ENCODE measurements at regions of chr12 and their contacts with region 1.

Region 1: GRCh38 chr12:52980693-52981423 is 25.4 kb upstream of the EIF4B start:
- DNase-seq: peak; percentile 94
- H3K4me3 ChIP-seq: no peak overlapping the region
- H3K27ac ChIP-seq: no peak overlapping the region
- H3K4me1 ChIP-seq: no peaks in the 10 kb centered on the region
- H3K27me3 ChIP-seq: no peaks in the 10 kb centered on the region
- CTCF ChIP-seq: peak; percentile 100

Region 2: DNA sequence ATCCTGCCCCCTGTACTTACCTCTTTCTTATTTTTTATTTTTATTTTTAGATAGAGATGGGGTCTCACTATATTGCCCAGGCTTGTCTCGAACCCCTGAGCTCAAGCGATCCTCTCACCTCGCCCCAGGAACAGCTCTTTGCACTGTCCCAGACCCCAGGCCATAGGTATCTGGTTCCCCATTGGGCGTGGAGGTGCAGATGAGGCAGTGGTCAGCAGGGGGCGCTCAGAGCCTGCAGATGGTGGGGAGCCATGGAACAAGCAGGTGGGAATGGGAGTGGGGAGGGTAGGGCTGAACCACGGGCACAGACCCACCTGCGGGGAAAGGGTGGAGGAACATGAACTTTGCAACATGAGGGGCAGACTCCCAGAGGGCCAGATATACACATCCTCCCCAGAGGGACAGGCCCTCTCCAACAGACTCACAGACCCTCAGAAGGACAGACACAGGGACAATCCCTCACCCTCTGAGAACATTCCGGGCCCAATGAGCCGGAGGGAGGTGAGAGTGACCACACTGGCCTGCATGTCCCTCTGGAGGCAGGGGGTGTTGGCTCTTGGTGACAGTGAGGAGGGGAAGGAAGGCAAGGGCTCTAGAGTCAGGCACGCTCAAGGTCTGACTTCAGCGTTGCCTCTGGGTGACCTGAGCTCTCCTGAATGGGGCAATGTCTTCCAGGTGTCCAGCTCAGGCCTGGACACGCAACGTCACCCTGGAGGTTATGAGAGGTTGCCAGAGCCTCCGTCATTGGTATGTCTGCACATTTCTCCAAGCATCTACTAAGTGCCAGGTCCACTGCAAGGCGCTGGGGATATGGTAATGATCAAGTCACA is 823.9 kb before region 1 on chr12:
- CTCF ChIA-PET with region 1: no interaction called
- POLR2A ChIA-PET with region 1: no interaction called
- intact Hi-C with region 1: loop called (anchors 5 kb)
- DNase-seq: peak; percentile 74
- H3K4me3 ChIP-seq: no peak overlapping the region
- H3K27ac ChIP-seq: no peak overlapping the region
- H3K4me1 ChIP-seq: no peaks in the 10 kb centered on the region
- H3K27me3 ChIP-seq: no peaks in the 10 kb centered on the region
- CTCF ChIP-seq: peak; percentile 99

Region 3: DNA sequence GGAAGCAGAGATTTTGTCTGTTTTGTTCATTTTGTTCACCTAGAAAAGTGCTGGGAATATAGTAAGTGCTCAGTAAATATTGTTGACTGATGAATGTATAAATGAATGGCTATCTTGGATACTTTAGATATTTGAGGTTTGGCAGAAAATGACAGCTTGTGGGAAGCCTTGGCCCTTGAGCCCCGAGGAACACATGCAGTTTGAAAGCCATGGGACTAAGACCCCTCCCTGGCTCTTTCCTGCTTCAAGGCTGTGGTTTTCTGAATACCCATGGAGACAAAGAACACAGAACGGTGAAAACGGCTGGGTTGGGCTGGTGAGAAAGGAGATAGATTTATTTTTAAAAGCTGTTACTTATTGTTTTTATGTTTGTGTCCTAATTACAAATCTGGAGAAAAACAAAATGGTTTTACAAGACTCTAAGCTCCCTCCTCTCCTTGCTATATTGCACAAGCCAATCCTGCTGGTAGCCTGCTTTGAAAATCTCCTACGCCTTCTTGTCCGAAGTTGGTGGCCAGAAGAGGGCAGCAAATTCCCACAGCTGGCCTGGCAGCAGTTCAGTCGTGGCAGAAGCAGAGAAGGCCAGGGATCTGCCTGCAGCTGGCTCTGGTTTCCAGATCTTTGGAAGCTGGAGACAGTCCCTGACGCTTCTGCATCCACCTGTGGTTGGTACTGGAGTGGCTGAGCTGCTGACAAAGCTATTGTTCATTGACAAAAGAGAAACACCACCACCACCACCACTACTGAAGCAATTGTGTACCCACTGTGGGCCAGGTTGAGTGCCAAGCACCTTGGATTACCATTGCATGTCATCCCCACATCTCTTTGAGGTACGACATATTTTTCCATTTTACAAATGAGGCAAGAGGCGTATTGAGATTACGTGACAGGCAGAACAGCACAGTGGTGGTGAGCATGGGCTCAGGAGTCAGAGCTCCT is 608.4 kb before region 1 on chr12:
- CTCF ChIA-PET with region 1: interaction called, 4 read pairs
- POLR2A ChIA-PET with region 1: no interaction called
- intact Hi-C with region 1: loop called (anchors 5 kb)
- DNase-seq: peak; percentile 76
- H3K4me3 ChIP-seq: no peak overlapping the region
- H3K27ac ChIP-seq: no peak overlapping the region
- H3K4me1 ChIP-seq: no peaks in the 10 kb centered on the region
- H3K27me3 ChIP-seq: no peaks in the 10 kb centered on the region
- CTCF ChIP-seq: peak; percentile 73

Region 4: DNA sequence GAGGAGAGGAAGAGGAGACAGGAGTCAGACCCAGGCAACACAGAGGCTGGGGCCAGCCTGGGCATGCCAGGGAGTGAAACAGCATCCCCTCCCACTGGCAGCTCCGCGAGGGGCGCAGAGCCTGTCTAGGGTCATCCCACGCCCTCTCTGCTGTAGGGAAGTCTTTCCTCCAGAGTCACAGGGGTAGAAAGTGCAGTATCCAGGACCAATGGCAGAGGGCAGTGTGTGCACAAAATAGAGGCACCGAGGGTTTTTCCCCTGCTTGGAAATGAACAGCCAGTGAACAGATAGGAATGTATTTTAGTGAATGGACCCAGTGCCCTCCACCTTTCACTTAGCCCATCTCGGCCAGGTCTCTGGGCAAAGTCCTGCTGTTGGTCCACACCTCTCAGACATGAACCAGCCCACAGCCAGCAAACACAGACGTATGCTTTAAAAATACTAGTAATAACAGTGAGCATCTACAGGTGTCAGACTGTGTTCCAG is 397.8 kb before region 1 on chr12:
- CTCF ChIA-PET with region 1: no interaction called
- POLR2A ChIA-PET with region 1: no interaction called
- intact Hi-C with region 1: loop called (anchors 5 kb)
- DNase-seq: peak; percentile 75
- H3K4me3 ChIP-seq: no peak overlapping the region
- H3K27ac ChIP-seq: no peak overlapping the region
- H3K4me1 ChIP-seq: no peaks in the 10 kb centered on the region
- H3K27me3 ChIP-seq: no peaks in the 10 kb centered on the region
- CTCF ChIP-seq: peak; percentile 75

Region 5: GRCh38 chr12:52748578-52748977 is 232.3 kb before region 1 on chr12:
- CTCF ChIA-PET with region 1: no interaction called
- POLR2A ChIA-PET with region 1: no interaction called
- intact Hi-C with region 1: no loop called
- DNase-seq: no peak
- H3K4me3 ChIP-seq: no peak overlapping the region
- H3K27ac ChIP-seq: no peak overlapping the region
- H3K4me1 ChIP-seq: peaks cover 26% of the 10 kb centered on the region
- H3K27me3 ChIP-seq: no peaks in the 10 kb centered on the region
- CTCF ChIP-seq: no peak

Region 6: DNA sequence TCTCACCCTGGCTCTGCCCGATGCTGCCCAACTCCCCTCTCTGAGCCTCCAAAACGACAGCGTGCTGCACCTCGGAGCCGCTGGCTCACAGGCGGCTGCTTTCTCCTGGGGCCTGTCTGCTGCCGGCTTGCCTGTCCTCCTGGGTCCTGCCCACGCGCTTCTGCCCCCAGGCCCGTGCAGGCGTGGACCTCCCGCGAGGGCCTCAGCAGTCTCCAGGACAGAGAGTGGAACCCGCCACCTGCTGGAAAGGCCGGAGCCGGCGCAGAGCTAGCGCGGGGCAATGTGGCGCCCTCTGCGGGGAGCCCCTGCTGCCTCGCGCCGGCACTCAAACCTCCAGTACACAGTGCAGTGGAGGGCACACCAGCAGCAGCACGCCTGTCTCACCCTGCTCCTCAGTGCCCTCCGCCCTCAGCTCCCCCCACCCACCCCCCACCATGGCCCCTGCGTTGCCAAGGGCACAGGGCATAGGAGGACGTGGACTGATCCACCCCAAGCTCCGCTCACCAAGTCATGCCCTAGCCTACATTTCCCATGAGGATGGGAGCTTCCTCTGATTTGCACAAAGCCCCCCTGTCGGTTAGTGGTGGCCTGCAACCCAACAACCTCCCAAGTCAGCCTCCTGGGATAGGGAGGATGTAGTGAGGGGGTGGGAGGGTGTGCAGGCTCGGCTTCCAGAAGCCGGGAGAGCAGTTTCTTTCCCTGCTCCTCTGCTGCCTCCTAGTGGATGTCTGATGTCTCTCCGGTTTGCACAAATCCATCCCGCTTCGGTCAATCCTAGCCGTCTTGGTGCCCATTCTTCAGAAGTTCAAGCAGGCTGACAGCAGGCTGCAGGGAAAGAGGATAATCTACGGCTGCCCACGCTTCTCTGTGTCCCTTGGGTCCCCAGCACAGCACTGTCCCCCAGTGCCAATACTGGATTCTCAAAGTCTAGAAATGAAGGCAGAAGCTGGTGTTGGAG is 101.2 kb before region 1 on chr12:
- CTCF ChIA-PET with region 1: interaction called, 121 read pairs
- POLR2A ChIA-PET with region 1: no interaction called
- intact Hi-C with region 1: no loop called
- DNase-seq: peak; percentile 94
- H3K4me3 ChIP-seq: peak overlapping the region; percentile 30
- H3K27ac ChIP-seq: peak overlapping the region; percentile 11
- H3K4me1 ChIP-seq: peaks cover 8% of the 10 kb centered on the region
- H3K27me3 ChIP-seq: no peaks in the 10 kb centered on the region
- CTCF ChIP-seq: peak; percentile 72

Region 7: DNA sequence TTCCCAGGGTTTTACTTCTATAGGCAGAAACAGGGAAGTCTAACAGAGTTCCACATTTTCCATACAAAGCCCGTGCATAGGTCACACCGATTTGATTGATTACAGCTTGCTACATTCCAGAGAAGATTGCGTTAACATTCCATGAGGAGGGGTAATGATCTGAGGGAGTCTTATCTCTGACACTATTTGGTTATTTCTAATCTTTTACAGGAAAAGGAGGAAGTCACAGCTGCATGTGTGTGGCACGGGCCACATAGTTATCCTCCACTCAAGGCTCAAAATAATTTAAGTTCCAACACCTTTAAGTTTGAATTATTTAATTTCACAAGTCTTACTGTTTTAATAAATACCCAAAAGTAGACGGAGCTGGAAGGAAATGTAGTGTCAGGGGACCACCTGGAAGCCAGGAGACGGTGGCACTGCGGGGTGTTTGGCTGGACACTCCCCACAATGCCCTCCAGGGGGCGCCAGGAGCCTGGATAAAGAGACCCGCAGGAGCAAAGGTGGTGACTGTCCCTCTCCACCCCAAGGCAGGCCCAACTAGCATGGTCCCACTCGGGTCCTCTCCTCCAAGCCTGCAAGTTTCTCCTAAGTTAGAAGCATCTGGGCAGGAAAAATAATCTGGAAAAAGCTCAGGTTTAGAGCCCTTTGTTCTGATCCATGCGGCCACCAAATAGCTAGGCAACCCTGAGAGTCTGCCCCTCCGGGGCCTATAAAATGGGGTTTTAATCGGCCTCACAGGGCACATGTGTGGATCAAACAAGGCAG is 96.1 kb before region 1 on chr12:
- CTCF ChIA-PET with region 1: interaction called, 121 read pairs
- POLR2A ChIA-PET with region 1: no interaction called
- intact Hi-C with region 1: loop called (anchors 1 kb)
- DNase-seq: peak; percentile 79
- H3K4me3 ChIP-seq: no peak overlapping the region
- H3K27ac ChIP-seq: no peak overlapping the region
- H3K4me1 ChIP-seq: peaks cover 4% of the 10 kb centered on the region
- H3K27me3 ChIP-seq: no peaks in the 10 kb centered on the region
- CTCF ChIP-seq: peak; percentile 94

Region 8: DNA sequence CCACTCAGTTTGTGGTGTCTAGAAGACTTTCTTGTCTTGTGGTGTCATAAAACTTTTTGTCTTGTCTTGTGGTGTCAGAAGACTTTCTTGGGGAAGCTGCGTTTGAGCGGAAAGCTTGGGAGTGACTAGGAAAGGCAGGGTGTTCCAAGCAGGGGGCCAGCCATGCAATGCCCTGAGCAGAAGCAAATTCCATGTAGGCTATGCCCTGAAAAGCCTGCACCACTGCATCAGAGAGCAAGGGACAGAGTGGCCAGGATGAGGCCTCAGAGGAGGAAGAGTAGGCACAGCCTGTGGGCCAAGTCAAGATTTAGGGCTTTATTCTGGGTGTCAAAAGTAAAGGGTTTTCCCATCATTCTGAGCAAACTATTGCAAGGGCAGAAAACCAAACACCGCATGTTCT is 90.4 kb before region 1 on chr12:
- CTCF ChIA-PET with region 1: interaction called, 121 read pairs
- POLR2A ChIA-PET with region 1: no interaction called
- intact Hi-C with region 1: loop called (anchors 1 kb)
- DNase-seq: no peak
- H3K4me3 ChIP-seq: no peak overlapping the region
- H3K27ac ChIP-seq: no peak overlapping the region
- H3K4me1 ChIP-seq: peaks cover 5% of the 10 kb centered on the region
- H3K27me3 ChIP-seq: no peaks in the 10 kb centered on the region
- CTCF ChIP-seq: no peak